ENCODE measurements at regions of chrX and their contacts with region 1.

Region 1: GRCh38 chrX:48597353-48598264 is at the start of gene WDR13:
- DNase-seq: peak; percentile 77 to 93 (median 91)
- ATAC-seq: peak; percentile 93
- H3K4me3 ChIP-seq: peak within 1 kb of the TSS; percentile 98
- H3K4me3 Mint-ChIP-seq: peak within 1 kb of the TSS; percentile 81 to 99 (median 96)
- H3K27ac ChIP-seq: peak within 1 kb of the TSS; percentile 94
- H3K27ac Mint-ChIP-seq: peak within 1 kb of the TSS; percentile 98 to 100 (median 99)
- H3K4me1 ChIP-seq: peaks cover 0 to 8% of the 10 kb centered on the region in 2 donors
- H3K4me1 Mint-ChIP-seq: peaks cover 4 to 16% (median 11%) of the 10 kb centered on the region in 7 donors
- H3K27me3 ChIP-seq: no peaks in the 10 kb centered on the region
- H3K27me3 Mint-ChIP-seq: peaks cover 0 to 2% (median 0%) of the 10 kb centered on the region in 5 donors
- total RNA-seq, gene WDR13: 44.8 to 66.9 (median 54.4) TPM

Region 2: GRCh38 chrX:48521353-48522243 is 76.0 kb before region 1 on chrX and contains the start of gene EBP:
- CTCF ChIA-PET with region 1: no interaction called
- POLR2A ChIA-PET with region 1: no interaction called
- intact Hi-C with region 1: loop called in 1 of 2 experiments (anchors 5 kb)
- DNase-seq: peak; percentile 82 to 96 (median 94)
- ATAC-seq: peak; percentile 98
- H3K4me3 ChIP-seq: peak within 1 kb of the TSS; percentile 78
- H3K4me3 Mint-ChIP-seq: peak within 1 kb of the TSS; percentile 73 to 93 (median 89)
- H3K27ac ChIP-seq: peak within 1 kb of the TSS; percentile 82
- H3K27ac Mint-ChIP-seq: peak within 1 kb of the TSS; percentile 90 to 99 (median 94)
- H3K4me1 ChIP-seq: peaks cover 12 to 19% of the 10 kb centered on the region in 2 donors
- H3K4me1 Mint-ChIP-seq: peaks cover 14 to 39% (median 34%) of the 10 kb centered on the region in 7 donors
- H3K27me3 ChIP-seq: no peaks in the 10 kb centered on the region
- H3K27me3 Mint-ChIP-seq: no peaks in the 10 kb centered on the region
- total RNA-seq, gene EBP: 33.3 to 188 (median 35.3) TPM

Region 3: GRCh38 chrX:48574270-48575266 is 23.0 kb before region 1 on chrX and contains the start of gene RBM3:
- CTCF ChIA-PET with region 1: no interaction called
- POLR2A ChIA-PET with region 1: interaction called, 12 read pairs
- intact Hi-C with region 1: loop called (anchors 1 kb)
- DNase-seq: peak; percentile 64 to 96 (median 92)
- ATAC-seq: peak; percentile 94
- H3K4me3 ChIP-seq: peak within 1 kb of the TSS; percentile 68
- H3K4me3 Mint-ChIP-seq: peak within 1 kb of the TSS; percentile 88 to 100 (median 97)
- H3K27ac ChIP-seq: peak within 1 kb of the TSS; percentile 99
- H3K27ac Mint-ChIP-seq: peak within 1 kb of the TSS; percentile 95 to 100 (median 99)
- H3K4me1 ChIP-seq: peaks cover 16 to 20% of the 10 kb centered on the region in 2 donors
- H3K4me1 Mint-ChIP-seq: peaks cover 6 to 32% (median 25%) of the 10 kb centered on the region in 7 donors
- H3K27me3 ChIP-seq: no peaks in the 10 kb centered on the region
- H3K27me3 Mint-ChIP-seq: no peaks in the 10 kb centered on the region
- total RNA-seq, gene RBM3: 176 to 374 (median 329) TPM

Region 4: DNA sequence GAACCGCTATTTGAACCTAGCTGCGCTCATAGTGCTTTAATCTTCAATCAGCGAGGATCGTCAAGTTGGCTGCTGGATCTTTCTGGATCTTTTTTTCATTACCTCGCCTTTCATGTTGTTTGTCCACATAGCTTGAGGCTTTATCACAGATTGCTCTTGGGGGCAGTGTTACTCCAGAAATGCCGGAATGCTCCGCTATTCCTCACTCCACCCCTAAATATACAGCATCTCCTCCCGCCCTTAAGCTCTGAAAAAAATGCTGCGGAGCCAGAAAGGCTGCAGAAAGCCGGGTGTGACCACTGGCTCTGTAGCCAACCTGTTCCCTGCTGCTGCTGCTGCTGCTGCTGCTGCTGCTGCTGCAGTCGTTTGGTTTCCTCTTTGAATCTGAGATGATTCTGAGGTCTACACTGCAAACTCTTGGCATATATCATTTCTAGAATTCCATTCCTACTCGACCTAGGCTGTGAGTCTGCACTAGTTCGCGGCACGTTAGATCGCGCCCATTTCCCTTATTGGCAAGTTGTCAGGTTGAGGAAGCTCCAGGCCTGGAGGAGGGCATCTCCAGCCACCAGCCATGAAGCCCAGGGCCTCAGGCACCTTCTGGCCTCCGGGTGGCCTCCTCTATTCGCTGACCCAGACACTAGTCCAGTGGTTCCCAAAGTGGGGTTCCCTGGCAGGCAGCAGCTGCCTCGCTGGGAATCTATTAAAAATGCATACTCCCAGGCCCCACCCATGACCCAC is 33.9 kb after region 1 on chrX:
- CTCF ChIA-PET with region 1: no interaction called
- POLR2A ChIA-PET with region 1: interaction called, 3 read pairs
- intact Hi-C with region 1: loop called in 1 of 2 experiments (anchors 1 kb)
- DNase-seq: peak; percentile 13 to 74 (median 54)
- ATAC-seq: peak; percentile 88
- H3K4me3 ChIP-seq: no peak overlapping the region
- H3K4me3 Mint-ChIP-seq: peak overlapping the region in 9 of 10 donors; percentile 38 to 70 (median 57)
- H3K27ac ChIP-seq: no peak overlapping the region
- H3K27ac Mint-ChIP-seq: peak overlapping the region in 7 of 9 donors; percentile 28 to 79 (median 54)
- H3K4me1 ChIP-seq: peaks cover 7 to 14% of the 10 kb centered on the region in 2 donors
- H3K4me1 Mint-ChIP-seq: peaks cover 2 to 14% (median 7%) of the 10 kb centered on the region in 7 donors
- H3K27me3 ChIP-seq: no peaks in the 10 kb centered on the region
- H3K27me3 Mint-ChIP-seq: no peaks in the 10 kb centered on the region

Region 5: GRCh38 chrX:48683411-48683982 is 85.9 kb after region 1 on chrX and contains the start of gene WAS:
- CTCF ChIA-PET with region 1: no interaction called
- POLR2A ChIA-PET with region 1: no interaction called
- intact Hi-C with region 1: loop called in 1 of 2 experiments (anchors 10 kb)
- DNase-seq: peak in 8 of 9 donors; percentile 35 to 63 (median 54)
- ATAC-seq: peak; percentile 85
- H3K4me3 ChIP-seq: peak within 1 kb of the TSS; percentile 82
- H3K4me3 Mint-ChIP-seq: peak within 1 kb of the TSS; percentile 84 to 98 (median 91)
- H3K27ac ChIP-seq: peak within 1 kb of the TSS; percentile 76
- H3K27ac Mint-ChIP-seq: peak within 1 kb of the TSS; percentile 87 to 97 (median 95)
- H3K4me1 ChIP-seq: peaks cover 25 to 36% of the 10 kb centered on the region in 2 donors
- H3K4me1 Mint-ChIP-seq: peaks cover 33 to 69% (median 54%) of the 10 kb centered on the region in 7 donors
- H3K27me3 ChIP-seq: no peaks in the 10 kb centered on the region
- H3K27me3 Mint-ChIP-seq: no peaks in the 10 kb centered on the region
- total RNA-seq, gene WAS: 92.2 to 164 (median 105) TPM

Region 6: GRCh38 chrX:48937054-48937907 is 339.7 kb after region 1 on chrX:
- CTCF ChIA-PET with region 1: no interaction called
- POLR2A ChIA-PET with region 1: interaction called, 4 read pairs
- intact Hi-C with region 1: loop called in 1 of 2 experiments (anchors 5 kb)
- DNase-seq: peak; percentile 59 to 96 (median 92)
- ATAC-seq: peak; percentile 75
- H3K4me3 ChIP-seq: peak overlapping the region; percentile 70
- H3K4me3 Mint-ChIP-seq: peak overlapping the region; percentile 78 to 96 (median 88)
- H3K27ac ChIP-seq: peak overlapping the region; percentile 97
- H3K27ac Mint-ChIP-seq: peak overlapping the region; percentile 96 to 99 (median 99)
- H3K4me1 ChIP-seq: peaks cover 69 to 80% of the 10 kb centered on the region in 2 donors
- H3K4me1 Mint-ChIP-seq: peaks cover 36 to 91% (median 80%) of the 10 kb centered on the region in 7 donors
- H3K27me3 ChIP-seq: no peaks in the 10 kb centered on the region
- H3K27me3 Mint-ChIP-seq: peaks cover 0 to 3% (median 0%) of the 10 kb centered on the region in 5 donors